Activated B cell treated with CpG ODN at 0.5 μM for 24 hours (primary cell): ENCODE measurements at regions of chr1 and their contacts with region 1.

Region 1: GRCh38 chr1:199422198-199422597 is 605.3 kb upstream of the NR5A2 start:
- DNase-seq: no peak
- ATAC-seq: no peak
- H3K4me3 Mint-ChIP-seq: no peak overlapping the region
- H3K27ac Mint-ChIP-seq: no peak overlapping the region
- H3K4me1 Mint-ChIP-seq: no peaks in the 10 kb centered on the region
- H3K27me3 Mint-ChIP-seq: no peaks in the 10 kb centered on the region
- CTCF ChIP-seq: no peak

Region 2: DNA sequence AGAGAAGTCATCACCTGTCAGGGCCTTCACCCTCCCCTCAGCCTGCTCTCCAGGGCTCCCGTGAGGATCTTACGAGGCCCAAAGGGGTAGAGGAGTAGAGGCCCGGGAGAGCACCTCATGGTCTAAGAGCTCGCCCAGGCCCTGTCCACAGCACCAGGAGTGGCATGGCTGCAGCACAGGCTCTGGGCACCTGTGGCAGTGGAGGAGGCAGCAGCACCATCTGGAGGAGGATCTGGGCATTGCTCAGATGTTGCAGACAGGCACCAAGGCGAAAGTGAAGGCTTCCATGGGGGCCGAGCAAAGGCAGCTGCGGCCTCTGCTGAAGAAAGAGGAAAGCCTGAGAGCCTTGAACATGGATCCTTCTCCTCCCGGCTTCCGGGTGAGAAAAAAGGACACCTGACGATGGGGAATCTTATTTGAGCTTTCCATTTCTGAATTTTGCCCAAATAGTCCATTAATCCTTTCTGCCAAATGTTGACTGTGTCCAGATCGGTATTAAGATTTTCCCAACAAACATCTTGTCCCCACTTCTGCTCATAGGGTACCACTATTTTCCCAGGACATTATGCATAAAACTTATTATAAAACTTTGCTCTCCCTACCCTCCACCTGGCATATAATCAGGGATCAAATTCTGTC is 178.7 kb before region 1 on chr1:
- CTCF ChIA-PET with region 1: no interaction called
- POLR2A ChIA-PET with region 1: no interaction called
- intact Hi-C with region 1: no loop called
- DNase-seq: peak; percentile 54
- ATAC-seq: peak; percentile 97
- H3K4me3 Mint-ChIP-seq: no peak overlapping the region
- H3K27ac Mint-ChIP-seq: no peak overlapping the region
- H3K4me1 Mint-ChIP-seq: peaks cover 17% of the 10 kb centered on the region
- H3K27me3 Mint-ChIP-seq: no peaks in the 10 kb centered on the region
- CTCF ChIP-seq: no peak

Region 3: GRCh38 chr1:199403531-199404116 is 18.6 kb before region 1 on chr1:
- CTCF ChIA-PET with region 1: interaction called, 3 read pairs
- POLR2A ChIA-PET with region 1: no interaction called
- intact Hi-C with region 1: loop called (anchors 2 kb)
- DNase-seq: no peak
- ATAC-seq: peak; percentile 56
- H3K4me3 Mint-ChIP-seq: no peak overlapping the region
- H3K27ac Mint-ChIP-seq: no peak overlapping the region
- H3K4me1 Mint-ChIP-seq: peaks cover 59% of the 10 kb centered on the region
- H3K27me3 Mint-ChIP-seq: no peaks in the 10 kb centered on the region
- CTCF ChIP-seq: no peak

Region 4: DNA sequence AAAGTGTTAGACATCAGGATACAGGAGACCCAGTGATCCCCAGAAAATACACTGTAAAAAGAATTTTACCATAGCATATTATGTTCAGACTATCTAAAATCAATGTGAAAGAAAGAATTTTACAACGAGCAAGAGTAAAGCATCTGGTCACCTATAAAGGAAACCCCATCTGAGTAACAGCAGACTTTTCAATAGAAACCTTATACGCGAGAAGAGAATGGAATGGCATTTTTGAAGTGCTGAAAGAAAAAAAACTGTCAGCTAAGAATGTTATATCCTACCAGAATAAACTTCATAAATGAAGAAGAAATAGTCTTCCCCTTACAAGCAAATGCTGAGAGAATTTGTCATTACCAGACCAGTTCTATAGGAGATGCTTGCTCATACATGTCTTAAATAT is 73.2 kb after region 1 on chr1:
- CTCF ChIA-PET with region 1: no interaction called
- POLR2A ChIA-PET with region 1: no interaction called
- intact Hi-C with region 1: no loop called
- DNase-seq: no peak
- ATAC-seq: no peak
- H3K4me3 Mint-ChIP-seq: no peak overlapping the region
- H3K27ac Mint-ChIP-seq: no peak overlapping the region
- H3K4me1 Mint-ChIP-seq: peaks cover 49% of the 10 kb centered on the region
- H3K27me3 Mint-ChIP-seq: no peaks in the 10 kb centered on the region
- CTCF ChIP-seq: no peak

Region 5: DNA sequence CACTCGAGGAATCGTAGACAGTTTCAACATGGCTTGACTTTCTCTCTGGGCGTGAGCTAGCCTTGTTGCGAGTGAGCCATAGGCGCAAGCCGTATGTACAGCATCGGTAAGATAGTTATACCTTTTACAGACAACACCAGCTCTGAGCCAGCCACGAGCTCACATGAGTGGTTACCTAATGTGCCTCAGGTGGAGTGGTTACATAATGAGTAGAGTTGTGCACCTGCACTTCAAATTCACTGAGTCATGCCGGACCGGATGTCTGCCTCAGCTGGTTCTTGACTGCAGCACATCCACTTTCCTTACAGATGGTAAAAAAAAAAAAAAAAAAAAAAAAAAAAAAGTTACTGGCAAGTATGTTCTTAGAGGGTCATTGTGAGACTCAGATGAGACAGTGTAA is 244.9 kb after region 1 on chr1:
- CTCF ChIA-PET with region 1: no interaction called
- POLR2A ChIA-PET with region 1: no interaction called
- intact Hi-C with region 1: no loop called
- DNase-seq: no peak
- ATAC-seq: no peak
- H3K4me3 Mint-ChIP-seq: no peak overlapping the region
- H3K27ac Mint-ChIP-seq: no peak overlapping the region
- H3K4me1 Mint-ChIP-seq: no peaks in the 10 kb centered on the region
- H3K27me3 Mint-ChIP-seq: peaks cover 8% of the 10 kb centered on the region
- CTCF ChIP-seq: no peak